ENCODE measurements at regions of chr12 and their contacts with region 1.

Region 1: GRCh38 chr12:21773263-21773741 is 1.2 kb downstream of the KCNJ8 start:
- DNase-seq: peak; percentile 59
- ATAC-seq: peak; percentile 27 to 53

Region 2: DNA sequence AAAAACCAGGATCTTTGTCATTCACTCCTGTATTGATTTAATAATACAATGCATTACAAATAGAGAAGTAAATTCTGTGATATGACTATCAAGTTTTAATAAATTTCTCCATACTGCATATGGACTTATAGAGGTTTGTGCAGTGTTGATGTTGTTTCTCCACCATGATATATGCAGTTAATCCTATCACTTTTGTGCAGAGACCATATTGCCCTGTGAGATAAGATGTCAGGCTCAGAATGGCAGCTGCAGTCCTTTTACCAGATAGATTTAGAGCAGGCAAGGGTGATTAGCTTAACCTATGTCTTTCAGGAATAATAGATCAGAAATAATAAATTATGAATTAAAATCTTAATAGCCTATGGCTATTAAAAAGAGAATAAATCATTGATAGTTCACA is 39.8 kb after region 1 on chr12:
- intact Hi-C with region 1: loop called in 1 of 2 experiments (anchors 5 kb)
- DNase-seq: no peak
- ATAC-seq: no peak

Region 3: GRCh38 chr12:21881965-21882364 is 108.7 kb after region 1 on chr12:
- intact Hi-C with region 1: no loop called
- DNase-seq: peak; percentile 31
- ATAC-seq: peak; percentile 72 to 86

Region 4: GRCh38 chr12:21940549-21941505 is 167.5 kb after region 1 on chr12 and contains the start of gene ABCC9:
- intact Hi-C with region 1: loop called in 1 of 2 experiments (anchors 2 kb)
- DNase-seq: peak; percentile 65
- ATAC-seq: peak; percentile 85 to 92
- total RNA-seq, gene ABCC9: 44.6 to 46.7 TPM

Region 5: DNA sequence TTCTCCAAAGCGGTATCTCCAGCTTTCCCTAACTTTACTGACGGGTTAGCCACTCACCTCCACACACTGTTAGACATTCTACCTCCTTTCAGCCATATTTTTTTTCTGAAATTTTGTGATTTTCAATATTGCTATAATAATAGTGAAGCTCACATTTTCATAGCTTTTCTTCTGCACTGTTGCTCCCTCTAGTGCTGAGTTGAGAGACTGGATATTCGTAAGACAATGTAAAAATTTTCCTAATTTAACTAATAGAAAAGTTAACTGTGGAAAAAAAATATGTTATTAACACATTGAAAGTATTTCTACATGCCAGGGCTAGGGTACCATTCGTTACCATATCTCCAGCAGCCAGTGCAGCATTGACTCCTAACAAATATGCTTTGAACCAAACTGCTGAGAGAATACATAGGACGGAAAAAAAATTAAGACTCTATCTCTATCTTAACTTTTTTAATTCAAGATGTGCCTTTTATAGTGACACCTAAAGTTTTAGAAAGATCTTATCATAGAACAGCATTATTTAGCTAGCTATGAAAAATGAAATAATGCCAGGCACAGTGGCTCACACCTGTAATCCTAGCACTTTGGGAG is 216.6 kb after region 1 on chr12:
- intact Hi-C with region 1: loop called in 1 of 2 experiments (anchors 5 kb)
- DNase-seq: no peak
- ATAC-seq: no peak

Measured in left cardiac atrium (tissue), 4 donors.